ENCODE measurements at regions of chr11 and their contacts with region 1.

Region 1: GRCh38 chr11:128422576-128423370 is 164.6 kb downstream of the ETS1 start:
- DNase-seq: peak; percentile 66 to 97 (median 87)
- ATAC-seq: peak; percentile 90
- H3K4me3 Mint-ChIP-seq: peak overlapping the region; percentile 55 to 77 (median 71)
- H3K27ac Mint-ChIP-seq: peak overlapping the region; percentile 86 to 99 (median 94)
- H3K4me1 Mint-ChIP-seq: peaks cover 26 to 73% (median 62%) of the 10 kb centered on the region in 4 donors
- H3K27me3 Mint-ChIP-seq: no peaks in the 10 kb centered on the region

Region 2: GRCh38 chr11:128342511-128343134 is 80.2 kb before region 1 on chr11:
- POLR2A ChIA-PET with region 1: interaction called, 15 read pairs
- DNase-seq: peak in 5 of 10 donors; percentile 12 to 64 (median 32)
- ATAC-seq: peak; percentile 17 to 32
- H3K4me3 Mint-ChIP-seq: peak overlapping the region in 8 of 10 donors; percentile 74 to 90 (median 84)
- H3K27ac Mint-ChIP-seq: peak overlapping the region; percentile 97 to 100 (median 98)
- H3K4me1 Mint-ChIP-seq: peaks cover 31 to 89% (median 75%) of the 10 kb centered on the region in 4 donors
- H3K27me3 Mint-ChIP-seq: no peaks in the 10 kb centered on the region

Region 3: DNA sequence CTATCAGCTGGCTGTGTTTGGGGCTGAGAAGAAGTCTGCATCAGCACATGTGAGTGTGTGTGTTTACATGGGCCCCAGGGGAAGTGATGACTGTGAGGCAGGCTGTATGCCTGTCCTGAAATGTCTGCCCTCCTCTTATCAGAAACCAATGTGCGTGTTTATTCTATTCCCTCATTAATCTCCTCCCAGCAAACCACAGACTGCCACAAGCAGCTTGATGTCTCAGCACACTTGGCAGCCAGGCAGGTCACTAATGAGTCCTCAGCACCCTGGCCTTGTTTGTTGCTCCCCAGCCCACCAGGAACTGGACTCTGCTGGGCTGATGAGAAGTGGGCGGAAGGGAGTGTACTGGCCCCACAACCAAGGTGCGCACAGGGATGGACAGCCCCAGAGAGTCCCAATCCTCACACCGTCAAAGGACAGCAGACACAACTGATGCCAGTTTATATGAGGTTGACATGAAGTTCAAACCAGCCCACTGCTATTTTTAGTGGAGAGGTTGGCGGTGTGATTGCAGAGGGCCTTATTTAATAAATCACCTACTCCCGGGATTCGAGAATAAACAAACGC is 61.2 kb before region 1 on chr11:
- POLR2A ChIA-PET with region 1: no interaction called
- DNase-seq: no peak
- ATAC-seq: no peak
- H3K4me3 Mint-ChIP-seq: peak overlapping the region in 1 of 10 donors; percentile 4
- H3K27ac Mint-ChIP-seq: peak overlapping the region in 8 of 10 donors; percentile 9 to 47 (median 22)
- H3K4me1 Mint-ChIP-seq: peaks cover 12 to 33% (median 17%) of the 10 kb centered on the region in 4 donors
- H3K27me3 Mint-ChIP-seq: no peaks in the 10 kb centered on the region